Activated CD4-positive, alpha-beta T cell treated with anti-CD3 and anti-CD28 coated beads for 36 hours (primary cell): ENCODE measurements at regions of chr2 and their contacts with region 1.

Region 1: DNA sequence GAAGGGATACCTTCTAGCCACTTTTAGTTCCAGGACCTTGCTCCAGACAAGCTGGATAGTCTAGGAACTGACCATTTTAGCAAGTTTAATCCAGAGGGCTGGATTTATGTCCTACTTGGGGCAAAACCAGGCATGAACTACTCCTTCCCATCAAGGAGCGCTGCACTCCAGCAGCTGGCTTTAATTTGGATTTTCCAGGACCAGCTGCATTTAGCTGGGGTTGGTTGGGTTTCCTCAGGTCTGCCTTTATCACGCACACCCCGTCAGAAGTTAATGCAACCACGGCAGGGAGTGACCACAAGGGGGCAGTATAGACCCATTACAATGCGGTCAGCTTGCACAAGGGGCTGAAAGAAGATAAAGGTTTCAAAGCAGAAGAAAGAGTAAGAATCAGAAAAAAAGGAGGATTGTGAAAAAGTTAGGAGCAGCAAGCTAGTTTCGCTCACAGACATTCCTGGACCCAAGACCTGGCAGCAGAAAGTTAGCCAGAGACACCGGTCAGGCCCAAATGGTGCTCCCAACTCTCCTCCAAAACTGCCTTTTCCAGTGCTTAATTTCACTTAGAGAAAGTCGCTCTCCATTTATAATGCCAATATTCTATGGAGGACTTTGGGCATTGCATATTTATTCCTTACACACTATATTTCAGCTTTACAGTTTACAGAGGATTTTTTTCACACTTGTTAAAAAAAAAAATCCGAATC is 40.1 kb downstream of the SLC4A1AP start:
- DNase-seq: peak; percentile 92
- ATAC-seq: peak; percentile 78
- H3K4me3 Mint-ChIP-seq: no peak overlapping the region
- H3K27ac Mint-ChIP-seq: peak overlapping the region; percentile 7
- H3K4me1 Mint-ChIP-seq: peaks cover 21% of the 10 kb centered on the region
- H3K27me3 Mint-ChIP-seq: no peaks in the 10 kb centered on the region

Region 2: GRCh38 chr2:27689424-27689823 is 14.4 kb before region 1 on chr2:
- CTCF ChIA-PET with region 1: interaction called, 23 read pairs
- POLR2A ChIA-PET with region 1: no interaction called
- intact Hi-C with region 1: no loop called
- DNase-seq: no peak
- ATAC-seq: no peak
- H3K4me3 Mint-ChIP-seq: no peak overlapping the region
- H3K27ac Mint-ChIP-seq: no peak overlapping the region
- H3K4me1 Mint-ChIP-seq: peaks cover 5% of the 10 kb centered on the region
- H3K27me3 Mint-ChIP-seq: no peaks in the 10 kb centered on the region

Region 3: DNA sequence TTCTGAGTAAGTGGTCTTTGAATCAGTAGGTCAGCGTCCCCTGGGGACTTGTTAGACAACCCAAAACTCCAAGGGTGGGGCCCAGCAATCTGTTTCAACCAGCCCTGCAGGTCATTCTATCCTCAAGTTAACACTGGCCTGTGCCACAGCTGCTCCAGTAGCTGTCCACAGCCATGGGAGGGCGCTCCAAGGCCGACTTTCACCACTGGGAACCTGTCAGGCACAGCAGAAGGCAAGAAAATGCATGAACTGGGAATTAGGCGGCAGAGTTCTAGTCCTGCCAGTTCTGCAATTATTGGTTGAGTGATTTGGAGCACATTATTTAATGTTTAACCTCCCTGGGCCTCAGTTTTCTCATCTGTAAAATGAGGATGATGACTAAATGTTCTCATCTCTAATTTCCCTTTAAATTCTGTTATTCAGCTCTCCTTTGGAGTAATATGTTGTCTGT is 50.4 kb after region 1 on chr2:
- CTCF ChIA-PET with region 1: interaction called, 4 read pairs
- POLR2A ChIA-PET with region 1: no interaction called
- intact Hi-C with region 1: loop called in 1 of 2 experiments (anchors 1 kb)
- DNase-seq: peak; percentile 92
- ATAC-seq: peak; percentile 99
- H3K4me3 Mint-ChIP-seq: no peak overlapping the region
- H3K27ac Mint-ChIP-seq: no peak overlapping the region
- H3K4me1 Mint-ChIP-seq: peaks cover 3% of the 10 kb centered on the region
- H3K27me3 Mint-ChIP-seq: peaks cover 3% of the 10 kb centered on the region

Region 4: GRCh38 chr2:27960237-27960912 is 256.6 kb after region 1 on chr2:
- CTCF ChIA-PET with region 1: no interaction called
- POLR2A ChIA-PET with region 1: no interaction called
- intact Hi-C with region 1: loop called in 1 of 2 experiments (anchors 5 kb)
- DNase-seq: peak; percentile 27
- ATAC-seq: peak; percentile 73
- H3K4me3 Mint-ChIP-seq: peak overlapping the region; percentile 6
- H3K27ac Mint-ChIP-seq: peak overlapping the region; percentile 34
- H3K4me1 Mint-ChIP-seq: peaks cover 72% of the 10 kb centered on the region
- H3K27me3 Mint-ChIP-seq: no peaks in the 10 kb centered on the region